CD4-positive, alpha-beta T cell (primary cell): ENCODE measurements at regions of chr9 and their contacts with region 1.

Region 1: DNA sequence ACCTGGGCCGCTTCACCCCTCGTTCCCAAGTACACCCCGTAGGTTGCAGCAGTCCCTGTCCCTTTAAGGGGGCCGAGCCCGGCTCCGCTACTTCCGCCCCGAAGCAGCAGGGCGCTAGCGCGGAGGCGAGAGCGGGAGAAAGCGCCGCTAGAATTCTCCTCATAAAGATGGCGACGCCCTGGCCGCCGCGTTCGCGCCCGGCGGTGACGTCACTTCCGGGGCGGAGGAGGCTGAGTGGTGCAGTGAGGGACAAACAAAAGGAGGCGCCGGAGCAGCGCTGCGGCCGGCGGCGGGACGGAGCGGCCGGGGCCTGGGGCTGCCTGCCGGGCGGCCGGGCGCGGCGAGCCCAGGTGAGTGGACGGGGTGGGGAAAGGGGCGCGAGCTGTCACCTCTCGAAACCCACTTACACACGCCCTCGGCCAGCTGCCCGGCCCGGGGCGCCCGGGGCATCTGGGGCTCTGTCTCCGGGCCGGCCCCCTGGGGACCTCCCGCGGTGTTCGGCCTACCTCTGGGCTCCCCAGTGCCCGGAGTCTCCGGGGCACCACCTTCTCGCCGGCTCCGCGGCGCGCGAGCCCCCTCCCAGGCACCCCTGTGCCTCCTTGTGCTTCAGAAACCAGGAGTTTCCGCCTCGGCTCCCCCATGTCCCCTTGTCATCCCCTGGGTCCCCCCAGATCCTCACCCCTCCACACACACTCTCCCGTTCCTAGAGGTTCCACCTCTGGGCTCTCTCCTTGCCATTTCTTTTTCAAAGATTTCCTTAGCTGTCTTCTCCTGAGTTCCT is at the starts of genes KYAT1 and LRRC8A:
- DNase-seq: peak; percentile 95 to 99 (median 98)
- ATAC-seq: peak; percentile 93
- H3K4me3 ChIP-seq: peak within 1 kb of the TSS; percentile 98
- H3K4me3 Mint-ChIP-seq: peak within 1 kb of the TSS; percentile 98
- H3K27ac ChIP-seq: peak within 1 kb of the TSS; percentile 72 to 77
- H3K27ac Mint-ChIP-seq: peak within 1 kb of the TSS; percentile 90
- H3K4me1 ChIP-seq: peaks cover 55% of the 10 kb centered on the region
- H3K4me1 Mint-ChIP-seq: peaks cover 76% of the 10 kb centered on the region
- H3K27me3 ChIP-seq: no peaks in the 10 kb centered on the region
- H3K27me3 Mint-ChIP-seq: no peaks in the 10 kb centered on the region
- CTCF ChIP-seq: no peak
- total RNA-seq, gene KYAT1: 2.8 to 4.7 TPM
- total RNA-seq, gene LRRC8A: 35.0 to 35.8 TPM

Region 2: GRCh38 chr9:128771745-128772519 is 110.2 kb before region 1 on chr9 and contains the start of gene ZER1:
- CTCF ChIA-PET with region 1: no interaction called
- POLR2A ChIA-PET with region 1: no interaction called
- intact Hi-C with region 1: loop called in 1 of 2 experiments (anchors 5 kb)
- DNase-seq: peak; percentile 88 to 97 (median 94)
- ATAC-seq: peak; percentile 85
- H3K4me3 ChIP-seq: peak within 1 kb of the TSS; percentile 95
- H3K4me3 Mint-ChIP-seq: peak within 1 kb of the TSS; percentile 98
- H3K27ac ChIP-seq: peak within 1 kb of the TSS; percentile 82 to 83
- H3K27ac Mint-ChIP-seq: peak within 1 kb of the TSS; percentile 98
- H3K4me1 ChIP-seq: peaks cover 25% of the 10 kb centered on the region
- H3K4me1 Mint-ChIP-seq: peaks cover 39% of the 10 kb centered on the region
- H3K27me3 ChIP-seq: no peaks in the 10 kb centered on the region
- H3K27me3 Mint-ChIP-seq: no peaks in the 10 kb centered on the region
- CTCF ChIP-seq: no peak
- total RNA-seq, gene ZER1: 25.4 to 32.6 TPM

Region 3: GRCh38 chr9:128818099-128818838 is 63.8 kb before region 1 on chr9 and contains the start of gene ENDOG:
- CTCF ChIA-PET with region 1: interaction called, 3 read pairs
- POLR2A ChIA-PET with region 1: interaction called, 15 read pairs
- intact Hi-C with region 1: loop called (anchors 2 to 5 kb)
- DNase-seq: peak; percentile 92 to 98 (median 97)
- ATAC-seq: peak; percentile 95
- H3K4me3 ChIP-seq: peak within 1 kb of the TSS; percentile 65
- H3K4me3 Mint-ChIP-seq: peak within 1 kb of the TSS; percentile 93
- H3K27ac ChIP-seq: peak within 1 kb of the TSS; percentile 34 to 53
- H3K27ac Mint-ChIP-seq: peak within 1 kb of the TSS; percentile 89
- H3K4me1 ChIP-seq: peaks cover 23% of the 10 kb centered on the region
- H3K4me1 Mint-ChIP-seq: peaks cover 11% of the 10 kb centered on the region
- H3K27me3 ChIP-seq: no peaks in the 10 kb centered on the region
- H3K27me3 Mint-ChIP-seq: no peaks in the 10 kb centered on the region
- CTCF ChIP-seq: peak; percentile 96
- total RNA-seq, gene ENDOG: 3.2 to 3.7 TPM

Region 4: GRCh38 chr9:128902351-128903078 is 20.4 kb after region 1 on chr9:
- CTCF ChIA-PET with region 1: interaction called, 4 read pairs
- POLR2A ChIA-PET with region 1: interaction called, 35 read pairs
- intact Hi-C with region 1: loop called (anchors 1 kb)
- DNase-seq: peak; percentile 79 to 95 (median 90)
- ATAC-seq: peak; percentile 93
- H3K4me3 ChIP-seq: peak overlapping the region; percentile 45
- H3K4me3 Mint-ChIP-seq: peak overlapping the region; percentile 81
- H3K27ac ChIP-seq: peak overlapping the region; percentile 95 to 96
- H3K27ac Mint-ChIP-seq: peak overlapping the region; percentile 95
- H3K4me1 ChIP-seq: peaks cover 82% of the 10 kb centered on the region
- H3K4me1 Mint-ChIP-seq: peaks cover 74% of the 10 kb centered on the region
- H3K27me3 ChIP-seq: no peaks in the 10 kb centered on the region
- H3K27me3 Mint-ChIP-seq: no peaks in the 10 kb centered on the region
- CTCF ChIP-seq: no peak

Region 5: DNA sequence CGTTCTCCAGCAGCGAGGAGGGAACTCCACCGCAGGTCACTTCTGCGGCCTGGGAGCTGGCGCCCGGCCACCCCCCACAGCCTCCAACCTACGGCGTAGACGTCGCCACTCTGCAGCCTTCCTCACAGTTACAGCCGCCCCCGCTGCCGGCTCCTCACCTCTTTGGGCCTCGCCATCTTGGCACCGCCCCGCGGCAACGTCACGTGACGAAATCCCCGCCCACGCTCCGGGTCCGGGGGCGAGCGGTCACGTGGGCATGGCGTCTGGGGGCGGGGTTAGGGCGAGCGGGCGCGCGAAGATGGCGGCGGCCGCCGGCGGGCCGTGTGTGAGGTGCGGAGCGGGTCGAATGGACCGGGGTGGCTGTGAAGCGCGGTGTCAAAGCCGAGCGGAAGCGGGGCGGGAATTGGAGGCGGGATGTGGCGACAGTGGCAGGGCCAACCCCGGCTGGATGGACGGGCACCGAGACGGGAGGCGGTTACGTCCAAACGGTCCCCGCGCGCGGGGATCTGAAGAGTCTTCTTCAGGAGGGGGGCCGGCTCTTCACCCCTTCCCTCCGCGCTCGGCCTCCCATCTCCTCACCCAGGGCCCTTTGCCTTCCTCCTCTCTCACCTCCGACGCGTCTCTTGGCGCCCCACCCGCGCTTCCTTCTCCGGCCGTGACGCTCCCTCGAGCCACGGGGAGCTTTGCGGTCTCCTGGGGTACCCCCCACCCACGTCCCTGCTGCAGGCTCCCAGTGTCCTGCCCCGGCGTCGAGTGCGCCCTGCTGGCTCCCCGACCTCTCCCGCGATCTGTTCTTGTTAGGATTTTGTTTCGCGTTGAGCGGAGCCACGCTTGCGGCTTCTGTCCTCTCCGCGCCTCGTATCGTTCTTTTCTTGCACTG is 65.6 kb after region 1 on chr9 and contains the starts of genes DOLK and NUP188:
- CTCF ChIA-PET with region 1: no interaction called
- POLR2A ChIA-PET with region 1: interaction called, 3 read pairs
- intact Hi-C with region 1: loop called in 1 of 2 experiments (anchors 1 kb)
- DNase-seq: peak; percentile 95 to 100 (median 99)
- ATAC-seq: peak; percentile 87
- H3K4me3 ChIP-seq: peak within 1 kb of the TSS; percentile 99
- H3K4me3 Mint-ChIP-seq: peak within 1 kb of the TSS; percentile 99
- H3K27ac ChIP-seq: peak within 1 kb of the TSS; percentile 93 to 97
- H3K27ac Mint-ChIP-seq: peak within 1 kb of the TSS; percentile 89
- H3K4me1 ChIP-seq: peaks cover 24% of the 10 kb centered on the region
- H3K4me1 Mint-ChIP-seq: peaks cover 37% of the 10 kb centered on the region
- H3K27me3 ChIP-seq: no peaks in the 10 kb centered on the region
- H3K27me3 Mint-ChIP-seq: no peaks in the 10 kb centered on the region
- CTCF ChIP-seq: no peak
- total RNA-seq, gene DOLK: 7.4 to 7.8 TPM
- total RNA-seq, gene NUP188: 43.0 to 43.9 TPM

Region 6: DNA sequence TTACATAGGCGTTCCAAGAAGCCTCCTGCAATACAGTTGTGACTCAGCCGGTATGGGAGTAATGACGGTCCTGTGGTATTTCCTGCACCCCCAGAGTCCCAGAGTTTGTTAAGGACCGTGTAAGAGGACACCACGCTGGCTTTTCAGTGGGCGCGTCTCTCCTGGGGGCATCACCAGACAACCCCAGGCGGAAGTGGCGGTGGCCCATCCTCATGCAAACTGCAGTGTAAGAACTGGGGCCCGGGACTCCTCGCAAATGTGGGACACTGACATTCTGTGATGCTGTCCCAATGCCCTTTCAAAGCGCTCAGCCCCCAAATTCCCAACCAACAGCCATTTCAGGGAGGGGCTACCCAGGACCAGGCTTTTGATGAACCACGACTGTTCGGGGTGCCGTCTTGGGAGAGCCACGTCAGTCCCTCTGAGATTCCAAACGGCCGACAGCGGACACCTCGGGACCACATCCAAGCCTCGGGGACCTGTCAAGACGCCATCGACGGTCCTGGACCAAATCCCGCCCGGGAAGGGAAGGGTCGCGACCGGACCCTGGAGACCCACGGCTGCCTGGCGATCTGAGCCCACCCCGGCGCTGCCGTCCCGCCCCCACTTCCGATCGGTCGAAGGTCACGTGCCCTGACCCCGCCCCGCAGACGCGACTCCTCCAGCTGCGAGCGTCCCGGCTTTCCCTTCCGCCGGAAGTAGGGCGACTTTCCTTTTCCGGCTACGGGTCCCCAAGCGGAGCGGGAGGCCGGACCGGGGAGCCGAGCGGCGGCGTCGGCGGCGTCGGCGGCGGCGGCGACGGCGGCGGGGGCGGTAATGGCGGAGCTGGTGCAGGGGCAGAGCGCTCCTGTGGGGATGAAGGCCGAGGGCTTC is 1697.0 kb after region 1 on chr9 and contains the start of gene FUBP3:
- CTCF ChIA-PET with region 1: no interaction called
- POLR2A ChIA-PET with region 1: no interaction called
- intact Hi-C with region 1: loop called in 1 of 2 experiments (anchors 5 kb)
- DNase-seq: peak; percentile 63 to 93 (median 86)
- ATAC-seq: peak; percentile 72
- H3K4me3 ChIP-seq: peak within 1 kb of the TSS; percentile 97
- H3K4me3 Mint-ChIP-seq: peak within 1 kb of the TSS; percentile 88
- H3K27ac ChIP-seq: peak within 1 kb of the TSS; percentile 77 to 87
- H3K27ac Mint-ChIP-seq: peak within 1 kb of the TSS; percentile 80
- H3K4me1 ChIP-seq: peaks cover 26% of the 10 kb centered on the region
- H3K4me1 Mint-ChIP-seq: peaks cover 60% of the 10 kb centered on the region
- H3K27me3 ChIP-seq: no peaks in the 10 kb centered on the region
- H3K27me3 Mint-ChIP-seq: no peaks in the 10 kb centered on the region
- CTCF ChIP-seq: no peak
- total RNA-seq, gene FUBP3: 21.2 to 30.2 TPM